ENCODE measurements at regions of chr17 and their contacts with region 1.

Region 1: DNA sequence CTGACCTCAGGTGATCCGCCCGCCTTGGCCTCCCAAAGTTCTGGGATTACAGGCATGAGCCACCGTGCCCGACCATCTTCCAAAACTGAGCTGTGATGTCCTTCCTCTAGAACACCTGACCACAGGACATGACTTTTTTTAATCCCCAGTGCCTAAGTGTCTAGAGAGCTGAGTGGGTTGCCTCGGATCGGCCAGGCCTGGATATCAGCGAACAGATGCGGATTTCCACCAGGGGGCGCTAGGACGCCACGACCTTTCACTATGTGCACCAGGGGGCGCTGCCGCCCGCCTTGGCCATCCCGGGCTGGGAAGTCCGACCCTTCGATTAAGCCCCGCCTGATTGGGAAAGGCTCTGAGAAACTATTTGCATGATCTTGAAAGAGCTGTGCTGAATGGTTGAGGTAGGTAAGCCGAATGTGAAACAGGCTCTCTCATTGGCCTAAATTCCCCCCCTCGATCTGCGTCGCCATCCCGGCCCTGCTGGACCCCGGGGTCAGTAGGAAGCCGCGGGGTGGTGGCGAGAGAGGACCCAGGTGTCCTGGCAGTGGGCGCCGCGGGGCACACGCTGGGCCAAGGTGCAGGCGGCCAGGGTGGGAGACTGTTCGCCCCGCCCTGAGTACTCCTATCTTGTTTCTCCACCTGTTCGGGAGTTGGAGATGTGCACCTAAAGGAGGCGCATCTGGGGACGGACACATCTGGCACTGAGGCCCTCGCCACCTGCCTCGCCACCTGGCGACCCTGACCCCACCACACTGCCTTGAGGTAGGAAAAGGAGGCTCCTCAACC is at the start of gene ACBD4:
- DNase-seq: peak; percentile 79
- H3K4me3 ChIP-seq: peak within 1 kb of the TSS; percentile 83
- H3K27me3 ChIP-seq: no peaks in the 10 kb centered on the region
- CTCF ChIP-seq: peak; percentile 100
- polyA plus RNA-seq, gene ACBD4: 5.4 and 7.3 TPM in 2 replicates

Region 2: DNA sequence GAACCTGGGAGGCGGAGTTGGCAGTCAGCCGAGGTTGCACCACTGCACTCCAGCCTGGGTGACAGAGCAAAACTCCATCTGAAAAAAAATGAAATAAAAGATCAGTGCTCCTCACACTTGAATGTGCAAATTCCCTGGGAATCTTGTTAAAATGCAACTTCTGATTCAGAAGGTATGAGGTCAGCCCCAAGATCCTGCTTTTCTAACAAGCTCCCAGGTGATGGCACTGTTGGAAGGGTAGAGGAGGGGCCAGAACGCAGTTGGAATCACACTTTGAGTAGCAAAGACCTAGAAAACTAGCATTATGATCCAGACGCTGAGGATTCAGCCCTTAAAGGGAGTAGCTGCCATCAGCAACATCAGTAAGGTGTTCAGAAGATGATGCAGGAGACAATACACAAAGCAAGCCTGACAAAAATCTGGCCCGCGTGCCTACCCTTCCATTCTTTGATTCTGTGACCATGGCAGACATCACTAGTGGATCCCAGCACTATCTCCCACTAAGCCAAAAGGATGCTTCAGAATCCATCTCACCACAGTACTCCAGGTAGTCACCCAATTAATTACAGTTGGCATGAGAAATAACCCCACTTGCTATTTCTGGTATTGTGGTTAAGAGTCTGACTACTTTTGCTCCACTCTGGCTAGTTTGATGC is 512.2 kb before region 1 on chr17:
- CTCF ChIA-PET with region 1: no interaction called
- POLR2A ChIA-PET with region 1: no interaction called
- DNase-seq: no peak
- H3K4me3 ChIP-seq: no peak overlapping the region
- H3K27me3 ChIP-seq: no peaks in the 10 kb centered on the region
- CTCF ChIP-seq: no peak

Region 3: GRCh38 chr17:44911133-44912001 is 224.0 kb before region 1 on chr17:
- CTCF ChIA-PET with region 1: interaction called, 11 read pairs
- POLR2A ChIA-PET with region 1: no interaction called
- DNase-seq: no peak
- H3K4me3 ChIP-seq: no peak overlapping the region
- H3K27me3 ChIP-seq: 0 out of 2 replicates have a peak, but pooled peaks cover 1% of the 10 kb centered on the region
- CTCF ChIP-seq: peak; percentile 62

Region 4: GRCh38 chr17:45108595-45109521 is 26.5 kb before region 1 on chr17:
- CTCF ChIA-PET with region 1: interaction called, 19 read pairs
- POLR2A ChIA-PET with region 1: no interaction called
- DNase-seq: no peak
- H3K4me3 ChIP-seq: no peak overlapping the region
- H3K27me3 ChIP-seq: no peaks in the 10 kb centered on the region
- CTCF ChIP-seq: peak; percentile 12; the same call in 1 of the 2 replicates

Region 5: GRCh38 chr17:45155029-45155428 is 19.6 kb after region 1 on chr17:
- CTCF ChIA-PET with region 1: interaction called, 131 read pairs
- POLR2A ChIA-PET with region 1: interaction called, 3 read pairs
- DNase-seq: no peak
- H3K4me3 ChIP-seq: no peak overlapping the region
- H3K27me3 ChIP-seq: no peaks in the 10 kb centered on the region
- CTCF ChIP-seq: no peak

Region 6: GRCh38 chr17:45190503-45191255 is 55.3 kb after region 1 on chr17:
- CTCF ChIA-PET with region 1: interaction called, 204 read pairs
- POLR2A ChIA-PET with region 1: no interaction called
- DNase-seq: no peak
- H3K4me3 ChIP-seq: no peak overlapping the region
- H3K27me3 ChIP-seq: no peaks in the 10 kb centered on the region
- CTCF ChIP-seq: no peak

Region 7: DNA sequence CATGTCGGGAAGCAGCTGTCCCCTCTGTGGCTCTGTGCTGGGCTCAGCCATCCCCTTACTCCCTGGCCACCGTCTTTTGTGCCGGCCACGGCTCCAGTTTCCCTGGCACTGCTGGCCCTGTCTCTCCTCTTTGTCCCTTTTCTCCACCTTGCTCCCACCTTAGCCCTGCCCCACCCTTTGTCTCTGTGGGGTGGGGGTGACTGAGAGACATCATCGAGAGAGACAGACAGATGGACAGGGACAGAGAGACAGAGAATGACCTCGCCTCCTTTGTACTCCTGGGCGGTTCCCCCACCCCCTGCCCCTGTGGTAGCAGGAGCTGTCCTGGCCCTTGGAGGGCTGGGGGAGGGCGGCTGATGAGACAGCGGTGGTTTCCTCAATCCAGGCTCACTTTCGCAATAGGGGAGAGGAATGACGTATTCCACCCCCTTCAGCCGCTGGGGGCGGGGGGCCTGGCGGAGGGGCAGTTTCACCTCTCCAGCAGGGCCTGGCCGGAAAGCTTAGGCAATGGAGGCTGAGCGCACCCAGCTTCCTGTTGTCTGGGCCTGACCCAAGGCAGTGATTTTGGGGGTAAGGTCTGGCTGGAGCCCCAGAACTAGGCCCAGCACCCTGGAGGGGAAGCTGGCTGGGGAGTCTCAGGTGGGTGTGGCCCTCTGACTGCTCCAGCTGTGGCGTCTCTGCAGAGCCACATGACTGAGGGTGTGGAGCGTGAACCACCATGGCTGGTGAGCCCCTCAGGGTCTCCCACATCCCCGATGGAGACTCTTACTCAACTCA is 93.6 kb after region 1 on chr17:
- CTCF ChIA-PET with region 1: interaction called, 47 read pairs
- POLR2A ChIA-PET with region 1: no interaction called
- DNase-seq: no peak
- H3K4me3 ChIP-seq: no peak overlapping the region
- H3K27me3 ChIP-seq: no peaks in the 10 kb centered on the region
- CTCF ChIP-seq: no peak